ENCODE measurements at regions of chr2 and their contacts with region 1.

Region 1: GRCh38 chr2:75064691-75065396 is 106.4 kb downstream of the POLE4 start:
- DNase-seq: no peak
- H3K4me3 ChIP-seq: no peak overlapping the region
- CTCF ChIP-seq: peak; percentile 75

Region 2: GRCh38 chr2:74764429-74765272 is 300.2 kb before region 1 on chr2:
- CTCF ChIA-PET with region 1: no interaction called
- POLR2A ChIA-PET with region 1: no interaction called
- DNase-seq: no peak
- H3K4me3 ChIP-seq: no peak overlapping the region
- CTCF ChIP-seq: no peak

Region 3: DNA sequence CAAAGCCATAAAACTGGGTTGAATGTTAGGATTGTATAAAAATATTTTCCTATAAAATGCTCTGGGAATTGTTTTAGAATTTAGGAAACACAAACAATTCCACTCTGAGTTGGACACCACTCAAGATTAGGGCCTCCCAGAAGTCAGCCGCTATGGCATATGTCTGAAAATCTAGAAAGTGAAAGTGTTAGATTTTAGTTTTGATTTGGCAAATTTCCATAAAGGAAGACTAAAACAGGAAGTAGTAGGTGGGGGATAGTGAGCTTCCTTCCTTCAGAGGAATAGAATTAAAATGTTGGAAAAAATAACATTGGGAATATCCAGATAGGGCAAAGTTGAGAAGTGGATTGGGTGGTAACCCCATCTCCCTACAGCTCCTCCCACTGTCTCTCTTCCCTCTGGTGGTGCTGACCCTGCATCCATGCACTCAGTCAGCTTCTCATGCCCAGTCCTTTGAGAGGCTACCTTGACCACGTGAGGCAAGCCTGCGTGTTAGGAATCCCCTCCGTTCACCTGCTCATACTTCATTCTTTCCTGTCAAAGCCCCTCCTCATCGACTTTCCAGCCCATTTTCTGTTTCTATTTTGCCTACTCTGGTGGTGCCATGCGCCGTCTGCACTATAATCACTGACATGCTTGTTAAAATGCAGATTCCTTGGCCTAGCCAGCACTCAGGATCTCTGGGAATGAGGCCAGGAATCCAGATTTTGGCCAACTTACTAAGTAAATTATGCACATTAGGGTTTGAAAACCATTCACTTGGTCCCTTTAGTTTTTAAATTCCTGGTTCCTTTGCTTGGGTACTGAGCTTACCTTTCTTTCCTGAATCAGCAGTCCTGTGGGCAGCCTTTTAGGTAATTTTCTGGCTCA is 22.9 kb before region 1 on chr2:
- CTCF ChIA-PET with region 1: interaction called, 19 read pairs
- POLR2A ChIA-PET with region 1: no interaction called
- DNase-seq: no peak
- H3K4me3 ChIP-seq: no peak overlapping the region
- CTCF ChIP-seq: no peak

Region 4: GRCh38 chr2:75053484-75054112 is 11.2 kb before region 1 on chr2:
- CTCF ChIA-PET with region 1: interaction called, 51 read pairs
- POLR2A ChIA-PET with region 1: no interaction called
- DNase-seq: no peak
- H3K4me3 ChIP-seq: no peak overlapping the region
- CTCF ChIP-seq: peak; percentile 65

Region 5: DNA sequence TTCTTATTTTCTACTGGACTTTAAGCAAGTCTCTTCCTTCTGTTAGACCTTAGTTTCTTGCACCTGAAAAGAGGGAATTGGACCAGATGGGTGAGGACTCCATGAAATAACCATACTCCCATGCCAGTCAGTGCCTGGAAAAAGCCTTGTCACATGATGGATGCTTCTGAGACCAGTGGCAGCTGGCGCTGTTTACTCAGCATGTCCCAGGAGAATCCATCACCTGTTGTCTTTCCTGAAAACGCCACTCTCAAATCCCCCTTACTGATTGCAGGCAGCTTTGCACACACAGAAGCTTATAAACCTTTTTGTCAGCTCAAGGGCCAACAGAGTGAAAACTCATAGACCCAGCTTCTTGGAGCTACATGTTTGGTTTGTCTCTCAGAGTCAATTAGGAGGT is 11.2 kb after region 1 on chr2:
- CTCF ChIA-PET with region 1: interaction called, 71 read pairs
- POLR2A ChIA-PET with region 1: no interaction called
- DNase-seq: no peak
- H3K4me3 ChIP-seq: no peak overlapping the region
- CTCF ChIP-seq: no peak

Measured in AG04449 (cell line).